Activated CD4-positive, alpha-beta T cell treated with anti-CD3 and anti-CD28 coated beads, Interleukin-2, amount 10 ng/mL, durations not matched to agents 24 days and 14 days (primary cell): ENCODE measurements at regions of chr19 and their contacts with region 1.

Region 1: DNA sequence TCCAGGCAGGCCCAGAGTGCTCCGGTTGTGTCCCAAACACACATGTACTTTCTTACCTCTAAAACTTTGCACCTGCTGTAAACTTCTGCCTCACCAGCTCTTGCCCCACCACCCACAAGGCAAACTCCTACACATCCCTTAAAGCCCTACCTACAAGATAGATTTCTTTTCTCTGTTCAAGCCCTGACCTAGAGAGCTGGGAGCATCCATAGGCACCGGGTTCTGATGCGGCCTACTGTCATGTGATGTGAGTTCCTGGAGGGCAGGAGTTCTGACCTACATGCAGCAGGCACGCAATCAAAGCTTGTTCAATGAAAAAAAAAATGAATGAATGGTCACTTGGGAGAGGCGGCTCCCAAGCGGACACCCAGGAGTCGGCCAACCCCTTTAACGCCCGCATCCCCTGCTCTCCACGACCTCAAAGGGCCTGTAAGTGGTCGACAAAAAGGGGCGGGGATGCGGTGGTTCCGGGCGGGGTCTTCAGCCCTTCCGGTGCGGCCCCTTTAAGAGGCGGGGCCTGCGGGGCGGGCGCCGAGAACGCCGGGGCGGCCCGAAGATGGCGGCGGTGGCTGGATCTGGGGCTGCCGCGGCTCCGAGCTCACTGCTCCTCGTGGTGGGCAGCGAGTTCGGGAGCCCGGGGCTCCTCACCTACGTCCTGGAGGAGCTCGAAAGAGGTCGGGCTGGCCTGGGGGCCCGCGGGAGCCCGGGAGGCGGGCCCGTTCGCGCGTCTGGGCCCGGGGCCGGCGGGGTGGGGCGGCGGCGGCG is at the start of gene MAP1S:
- DNase-seq: peak; percentile 93
- H3K4me3 Mint-ChIP-seq: peak within 1 kb of the TSS; percentile 91
- H3K27ac Mint-ChIP-seq: peak within 1 kb of the TSS; percentile 85
- H3K4me1 Mint-ChIP-seq: peaks cover 34% of the 10 kb centered on the region
- H3K27me3 Mint-ChIP-seq: no peaks in the 10 kb centered on the region
- total RNA-seq, gene MAP1S: 69.0 and 70.3 TPM in 2 replicates

Region 2: GRCh38 chr19:17703824-17704463 is 15.2 kb before region 1 on chr19:
- intact Hi-C with region 1: loop called (anchors 1 kb)
- DNase-seq: peak; percentile 92
- H3K4me3 Mint-ChIP-seq: no peak overlapping the region
- H3K27ac Mint-ChIP-seq: no peak overlapping the region
- H3K4me1 Mint-ChIP-seq: no peaks in the 10 kb centered on the region
- H3K27me3 Mint-ChIP-seq: peaks cover 5% of the 10 kb centered on the region

Region 3: GRCh38 chr19:17747205-17748098 is 28.3 kb after region 1 on chr19:
- intact Hi-C with region 1: loop called (anchors 1 kb)
- DNase-seq: peak; percentile 98
- H3K4me3 Mint-ChIP-seq: peak overlapping the region; percentile 94
- H3K27ac Mint-ChIP-seq: peak overlapping the region; percentile 86
- H3K4me1 Mint-ChIP-seq: peaks cover 35% of the 10 kb centered on the region
- H3K27me3 Mint-ChIP-seq: no peaks in the 10 kb centered on the region

Region 4: DNA sequence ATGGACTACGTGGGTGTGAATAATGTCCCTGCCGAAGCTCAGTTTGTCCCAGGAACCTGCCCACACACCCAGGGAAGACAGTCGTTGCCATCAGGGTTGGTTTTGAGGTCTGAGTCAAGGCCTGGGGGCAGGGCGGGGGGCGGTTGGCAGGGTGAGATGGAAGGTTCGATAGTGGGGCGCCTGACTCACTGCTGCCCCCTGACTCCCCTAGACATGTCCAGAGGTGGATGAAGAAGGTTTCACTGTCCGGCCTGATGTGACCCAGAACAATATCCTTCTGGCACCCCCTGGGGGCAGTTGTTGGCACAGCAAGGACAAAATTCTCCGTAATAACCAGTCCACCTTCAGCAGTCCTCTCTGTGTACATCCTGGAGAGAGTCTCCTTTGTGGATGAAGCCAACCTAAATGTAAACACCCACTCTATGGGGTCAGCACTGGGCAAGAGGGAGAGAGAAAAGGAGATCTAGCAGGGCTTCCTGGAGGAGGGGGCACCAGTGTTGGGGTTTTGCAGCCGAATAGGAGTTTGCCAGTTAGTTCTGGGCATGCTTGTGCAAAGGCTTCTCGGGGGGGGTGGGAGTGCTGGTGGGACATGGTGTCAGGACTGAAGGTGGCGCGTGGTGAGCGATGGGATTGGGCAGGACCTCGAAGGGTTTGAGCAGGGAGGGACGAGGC is 56.3 kb after region 1 on chr19:
- intact Hi-C with region 1: loop called (anchors 5 kb)
- DNase-seq: peak; percentile 77
- H3K4me3 Mint-ChIP-seq: no peak overlapping the region
- H3K27ac Mint-ChIP-seq: no peak overlapping the region
- H3K4me1 Mint-ChIP-seq: peaks cover 14% of the 10 kb centered on the region
- H3K27me3 Mint-ChIP-seq: no peaks in the 10 kb centered on the region